ENCODE measurements at regions of chr7 and their contacts with region 1.

Region 1: DNA sequence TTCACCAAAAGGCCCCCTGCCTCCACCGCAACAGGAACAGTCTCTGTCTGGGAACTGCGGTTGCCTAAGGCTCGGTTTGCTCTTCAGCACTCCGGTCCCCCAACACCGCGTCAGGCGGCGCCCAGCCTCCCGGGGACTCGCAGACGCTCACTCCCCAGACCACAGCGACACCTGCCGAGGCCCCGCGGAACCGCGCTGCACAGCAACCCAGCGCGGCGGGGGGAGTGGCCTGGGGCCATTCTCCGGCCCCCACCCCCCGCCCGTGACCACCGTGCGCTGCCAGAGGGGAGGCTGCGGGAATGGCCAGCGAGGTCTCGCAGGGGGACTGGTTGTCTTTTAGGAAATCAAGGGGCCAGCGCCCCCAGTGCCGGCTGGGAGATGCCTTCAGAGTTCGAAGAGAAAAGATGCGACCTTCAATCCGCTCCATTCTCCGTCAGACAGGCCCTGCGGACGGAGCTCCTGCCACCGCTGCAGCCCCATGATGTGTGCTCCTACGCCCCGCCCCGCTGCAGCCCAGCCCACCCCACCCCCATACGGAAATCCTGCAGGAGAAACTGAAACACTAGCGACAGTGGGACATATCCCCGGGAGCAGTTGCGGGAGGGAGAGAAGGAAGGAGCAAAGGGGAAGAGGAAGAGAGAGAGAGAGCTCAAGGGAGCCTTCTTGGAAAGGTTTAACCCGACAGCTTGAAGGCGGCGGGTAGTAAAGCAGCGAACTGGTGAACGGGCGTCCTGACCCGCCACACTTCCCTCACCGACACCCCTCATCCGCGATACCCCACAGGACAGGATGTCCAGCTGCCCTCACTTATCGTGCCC is 137.4 kb upstream of the CDCA7L start:
- DNase-seq: peak; percentile 84
- ATAC-seq: peak; percentile 99
- H3K4me3 Mint-ChIP-seq: peak overlapping the region; percentile 66
- H3K27ac Mint-ChIP-seq: no peak overlapping the region
- H3K4me1 Mint-ChIP-seq: peaks cover 8% of the 10 kb centered on the region
- H3K27me3 Mint-ChIP-seq: peaks cover 17% of the 10 kb centered on the region
- CTCF ChIP-seq: peak; percentile 96

Region 2: DNA sequence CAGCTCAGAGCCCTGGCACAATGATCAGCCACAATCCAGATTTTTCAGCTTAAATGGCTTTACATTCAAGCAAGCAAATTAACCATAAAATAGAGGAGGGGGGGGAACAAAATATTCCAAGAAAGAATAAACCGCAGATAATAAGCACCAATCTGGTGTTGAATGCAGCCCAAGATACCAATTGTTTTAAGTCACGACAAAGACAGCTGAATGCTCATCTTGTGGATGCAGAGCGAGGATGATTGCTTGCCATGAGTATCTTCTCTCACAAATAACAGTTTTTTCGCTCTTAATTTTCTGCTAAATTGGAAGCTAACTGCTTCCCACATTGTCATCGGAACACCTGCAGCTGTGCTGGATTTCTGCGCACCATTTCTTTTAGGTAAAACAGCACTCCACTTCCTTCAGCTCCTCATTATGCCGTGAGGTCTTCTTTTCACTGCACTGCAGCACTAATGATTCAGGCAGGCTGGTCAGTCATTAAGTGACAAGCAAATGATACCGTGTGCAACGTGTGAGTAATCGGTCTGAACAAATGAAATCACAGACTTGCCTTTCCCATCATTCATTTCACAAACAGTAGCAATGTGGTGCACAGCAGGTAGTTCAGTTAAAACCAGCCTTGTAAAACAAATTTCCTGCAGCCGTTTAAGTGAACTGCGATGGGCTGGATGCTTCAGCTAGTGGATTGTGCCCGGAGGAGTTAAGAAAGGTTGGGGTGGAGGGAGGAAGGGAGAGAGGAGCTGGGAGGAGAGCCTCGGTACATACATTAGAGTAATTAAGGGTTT is 31.0 kb before region 1 on chr7:
- CTCF ChIA-PET with region 1: interaction called, 11 read pairs
- POLR2A ChIA-PET with region 1: no interaction called
- intact Hi-C with region 1: no loop called
- DNase-seq: no peak
- ATAC-seq: no peak
- H3K4me3 Mint-ChIP-seq: no peak overlapping the region
- H3K27ac Mint-ChIP-seq: no peak overlapping the region
- H3K4me1 Mint-ChIP-seq: no peaks in the 10 kb centered on the region
- H3K27me3 Mint-ChIP-seq: peaks cover 9% of the 10 kb centered on the region
- CTCF ChIP-seq: no peak

Region 3: GRCh38 chr7:22066484-22066883 is 16.6 kb before region 1 on chr7:
- CTCF ChIA-PET with region 1: interaction called, 23 read pairs
- POLR2A ChIA-PET with region 1: no interaction called
- intact Hi-C with region 1: no loop called
- DNase-seq: no peak
- ATAC-seq: no peak
- H3K4me3 Mint-ChIP-seq: no peak overlapping the region
- H3K27ac Mint-ChIP-seq: no peak overlapping the region
- H3K4me1 Mint-ChIP-seq: no peaks in the 10 kb centered on the region
- H3K27me3 Mint-ChIP-seq: peaks cover 6% of the 10 kb centered on the region
- CTCF ChIP-seq: no peak

Region 4: GRCh38 chr7:22094413-22095342 is 11.6 kb after region 1 on chr7:
- CTCF ChIA-PET with region 1: interaction called, 33 read pairs
- POLR2A ChIA-PET with region 1: no interaction called
- intact Hi-C with region 1: no loop called
- DNase-seq: no peak
- ATAC-seq: no peak
- H3K4me3 Mint-ChIP-seq: no peak overlapping the region
- H3K27ac Mint-ChIP-seq: no peak overlapping the region
- H3K4me1 Mint-ChIP-seq: no peaks in the 10 kb centered on the region
- H3K27me3 Mint-ChIP-seq: peaks cover 1% of the 10 kb centered on the region
- CTCF ChIP-seq: no peak

Region 5: GRCh38 chr7:22103255-22103969 is 20.3 kb after region 1 on chr7:
- CTCF ChIA-PET with region 1: interaction called, 22 read pairs
- POLR2A ChIA-PET with region 1: no interaction called
- intact Hi-C with region 1: no loop called
- DNase-seq: peak; percentile 86
- ATAC-seq: peak; percentile 99
- H3K4me3 Mint-ChIP-seq: no peak overlapping the region
- H3K27ac Mint-ChIP-seq: no peak overlapping the region
- H3K4me1 Mint-ChIP-seq: peaks cover 4% of the 10 kb centered on the region
- H3K27me3 Mint-ChIP-seq: no peaks in the 10 kb centered on the region
- CTCF ChIP-seq: peak; percentile 65

Measured in activated CD8-positive, alpha-beta T cell treated with anti-CD3 and anti-CD28 coated beads for 36 hours (primary cell).